Activated CD4-positive, alpha-beta memory T cell treated with anti-CD3 and anti-CD28 coated beads for 36 hours (primary cell): ENCODE measurements at regions of chr3 and their contacts with region 1.

Region 1: GRCh38 chr3:184250167-184250828 is 826 bp downstream of the EEF1AKMT4 start:
- DNase-seq: peak; percentile 94
- H3K4me3 Mint-ChIP-seq: peak overlapping the region; percentile 90
- H3K27ac Mint-ChIP-seq: peak overlapping the region; percentile 69
- H3K4me1 Mint-ChIP-seq: peaks cover 8% of the 10 kb centered on the region
- H3K27me3 Mint-ChIP-seq: no peaks in the 10 kb centered on the region

Region 2: GRCh38 chr3:183802989-183803388 is 447.3 kb before region 1 on chr3:
- CTCF ChIA-PET with region 1: no interaction called
- POLR2A ChIA-PET with region 1: no interaction called
- intact Hi-C with region 1: no loop called
- DNase-seq: no peak
- H3K4me3 Mint-ChIP-seq: no peak overlapping the region
- H3K27ac Mint-ChIP-seq: no peak overlapping the region
- H3K4me1 Mint-ChIP-seq: no peaks in the 10 kb centered on the region
- H3K27me3 Mint-ChIP-seq: no peaks in the 10 kb centered on the region

Region 3: DNA sequence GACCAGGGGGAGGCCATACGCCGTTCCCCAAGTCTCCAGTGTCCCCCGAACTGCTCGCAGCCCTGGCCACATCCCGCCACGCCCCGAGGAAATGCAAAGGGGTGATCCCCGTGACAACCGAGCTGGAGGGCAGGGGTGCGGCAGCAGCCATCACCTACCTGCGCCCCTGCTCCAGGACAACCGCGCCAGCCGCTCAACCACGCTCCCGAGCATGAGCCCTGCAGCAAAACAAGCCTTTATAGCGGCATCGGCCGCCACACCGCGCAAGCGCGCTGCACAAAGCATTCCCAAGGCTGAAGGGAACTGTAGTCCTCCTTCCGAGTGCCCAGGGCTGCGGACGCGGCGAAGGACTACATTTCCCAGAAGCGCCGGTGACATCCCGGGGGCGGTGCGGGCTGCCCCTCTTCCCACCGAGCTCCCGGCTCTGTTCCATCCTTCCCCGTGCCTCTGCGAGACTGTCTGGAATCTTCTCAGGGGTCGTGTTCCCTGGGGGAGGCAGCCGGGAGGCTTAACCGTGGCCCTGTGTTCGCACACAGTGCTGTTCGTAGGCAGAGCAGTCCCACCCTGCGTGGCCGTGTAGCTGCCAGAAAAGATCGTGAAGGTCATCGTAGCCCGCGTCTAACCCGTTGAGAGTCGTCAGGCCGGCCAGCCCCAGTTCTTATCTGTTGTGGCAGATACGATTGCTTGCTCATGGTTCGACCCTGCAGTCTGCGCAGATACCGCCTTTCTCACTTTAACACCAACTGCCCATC is 232.4 kb before region 1 on chr3 and contains the start of gene ABCC5:
- CTCF ChIA-PET with region 1: interaction called, 3 read pairs
- POLR2A ChIA-PET with region 1: no interaction called
- intact Hi-C with region 1: loop called (anchors 1 kb)
- DNase-seq: peak; percentile 89
- H3K4me3 Mint-ChIP-seq: peak within 1 kb of the TSS; percentile 99
- H3K27ac Mint-ChIP-seq: peak within 1 kb of the TSS; percentile 85
- H3K4me1 Mint-ChIP-seq: peaks cover 23% of the 10 kb centered on the region
- H3K27me3 Mint-ChIP-seq: peaks cover 5% of the 10 kb centered on the region
- total RNA-seq, gene ABCC5: 13.3 to 15.6 TPM

Region 4: DNA sequence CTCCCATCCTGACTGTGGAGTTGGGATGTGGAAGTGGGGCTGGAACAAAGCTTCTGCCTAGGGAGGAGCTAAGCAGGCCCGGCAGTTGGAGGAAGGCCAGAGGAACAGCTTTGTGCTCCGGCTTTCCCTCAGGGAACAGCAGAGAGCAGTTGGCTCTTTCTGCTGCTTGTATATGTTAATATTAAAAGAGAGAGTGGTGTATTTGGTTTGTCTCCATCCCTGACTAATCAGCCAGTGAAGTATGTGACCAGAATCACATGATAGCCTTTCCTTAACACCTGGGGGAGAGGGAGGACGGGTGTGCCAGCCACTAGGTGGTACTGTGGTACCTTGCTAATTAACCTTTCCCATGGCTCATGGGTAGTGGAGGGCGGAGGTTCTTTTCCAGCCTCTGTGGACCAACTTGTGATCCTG is 105.2 kb before region 1 on chr3:
- CTCF ChIA-PET with region 1: no interaction called
- POLR2A ChIA-PET with region 1: no interaction called
- intact Hi-C with region 1: loop called (anchors 2 kb)
- DNase-seq: peak; percentile 53
- H3K4me3 Mint-ChIP-seq: no peak overlapping the region
- H3K27ac Mint-ChIP-seq: no peak overlapping the region
- H3K4me1 Mint-ChIP-seq: no peaks in the 10 kb centered on the region
- H3K27me3 Mint-ChIP-seq: no peaks in the 10 kb centered on the region

Region 5: GRCh38 chr3:184185461-184186308 is 64.6 kb before region 1 on chr3 and contains the start of gene ABCF3:
- CTCF ChIA-PET with region 1: interaction called, 7 read pairs
- POLR2A ChIA-PET with region 1: interaction called, 4 read pairs
- intact Hi-C with region 1: loop called (anchors 1 kb)
- DNase-seq: peak; percentile 99
- H3K4me3 Mint-ChIP-seq: peak within 1 kb of the TSS; percentile 96
- H3K27ac Mint-ChIP-seq: peak within 1 kb of the TSS; percentile 92
- H3K4me1 Mint-ChIP-seq: peaks cover 29% of the 10 kb centered on the region
- H3K27me3 Mint-ChIP-seq: no peaks in the 10 kb centered on the region
- total RNA-seq, gene ABCF3: 41.2 to 48.7 TPM

Region 6: GRCh38 chr3:184261270-184261853 is 11.1 kb after region 1 on chr3 and contains the start of gene CAMK2N2:
- CTCF ChIA-PET with region 1: interaction called, 15 read pairs
- POLR2A ChIA-PET with region 1: interaction called, 4 read pairs
- intact Hi-C with region 1: loop called (anchors 1 kb)
- DNase-seq: peak; percentile 65
- H3K4me3 Mint-ChIP-seq: peak within 1 kb of the TSS; percentile 79
- H3K27ac Mint-ChIP-seq: peak within 1 kb of the TSS; percentile 25
- H3K4me1 Mint-ChIP-seq: peaks cover 20% of the 10 kb centered on the region
- H3K27me3 Mint-ChIP-seq: peaks cover 22% of the 10 kb centered on the region
- total RNA-seq, gene CAMK2N2: 0.21 to 0.51 TPM

Region 7: GRCh38 chr3:184298759-184299496 is 48.6 kb after region 1 on chr3 and contains the start of gene PSMD2:
- CTCF ChIA-PET with region 1: interaction called, 5 read pairs
- POLR2A ChIA-PET with region 1: no interaction called
- intact Hi-C with region 1: loop called (anchors 1 kb)
- DNase-seq: peak; percentile 99
- H3K4me3 Mint-ChIP-seq: peak within 1 kb of the TSS; percentile 93
- H3K27ac Mint-ChIP-seq: peak within 1 kb of the TSS; percentile 82
- H3K4me1 Mint-ChIP-seq: peaks cover 21% of the 10 kb centered on the region
- H3K27me3 Mint-ChIP-seq: no peaks in the 10 kb centered on the region
- total RNA-seq, gene PSMD2: 246 to 257 TPM